ENCODE measurements at regions of chr17 and their contacts with region 1.

Region 1: DNA sequence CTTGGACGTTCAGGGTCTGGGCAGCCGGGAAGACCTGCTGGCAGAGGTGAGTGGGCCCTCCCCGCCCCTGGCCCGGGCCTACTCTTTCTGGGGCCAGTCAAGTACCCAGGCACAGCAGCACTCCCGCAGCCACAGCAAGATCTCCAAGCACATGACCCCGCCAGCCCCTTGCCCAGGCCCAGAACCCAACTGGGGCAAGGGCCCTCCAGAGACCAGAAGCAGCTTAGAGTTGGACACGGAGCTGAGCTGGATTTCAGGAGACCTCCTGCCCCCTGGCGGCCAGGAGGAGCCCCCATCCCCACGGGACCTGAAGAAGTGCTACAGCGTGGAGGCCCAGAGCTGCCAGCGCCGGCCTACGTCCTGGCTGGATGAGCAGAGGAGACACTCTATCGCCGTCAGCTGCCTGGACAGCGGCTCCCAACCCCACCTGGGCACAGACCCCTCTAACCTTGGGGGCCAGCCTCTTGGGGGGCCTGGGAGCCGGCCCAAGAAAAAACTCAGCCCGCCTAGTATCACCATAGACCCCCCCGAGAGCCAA is 8.6 kb upstream of the ABCC3 start:
- DNase-seq: peak; percentile 80 to 87
- ATAC-seq: peak; percentile 80 to 90 (median 82)
- H3K4me3 ChIP-seq: no peak overlapping the region
- H3K27ac ChIP-seq: no peak overlapping the region
- H3K4me1 ChIP-seq: no peaks in the 10 kb centered on the region
- H3K27me3 ChIP-seq: peaks cover 0 to 26% (median 3%) of the 10 kb centered on the region in 3 donors
- CTCF ChIP-seq: peak; percentile 72

Region 2: GRCh38 chr17:50681263-50682210 is 55.4 kb after region 1 on chr17:
- intact Hi-C with region 1: loop called in 1 of 2 experiments (anchors 5 kb)
- DNase-seq: no peak
- ATAC-seq: peak in 3 of 4 donors; percentile 17 to 51 (median 32)
- H3K4me3 ChIP-seq: no peak overlapping the region
- H3K27ac ChIP-seq: no peak overlapping the region
- H3K4me1 ChIP-seq: peaks cover 8% of the 10 kb centered on the region
- H3K27me3 ChIP-seq: no peaks in the 10 kb centered on the region
- CTCF ChIP-seq: peak; percentile 21

Region 3: GRCh38 chr17:50697663-50698274 is 71.7 kb after region 1 on chr17:
- intact Hi-C with region 1: loop called (anchors 5 kb)
- DNase-seq: no peak
- ATAC-seq: peak in 1 of 4 donors; percentile 32
- H3K4me3 ChIP-seq: no peak overlapping the region
- H3K27ac ChIP-seq: no peak overlapping the region
- H3K4me1 ChIP-seq: peaks cover 31% of the 10 kb centered on the region
- H3K27me3 ChIP-seq: no peaks in the 10 kb centered on the region
- CTCF ChIP-seq: no peak

Measured in psoas muscle (tissue), 8 donors.